T-cell (primary cell): ENCODE measurements at regions of chr13 and their contacts with region 1.

Region 1: GRCh38 chr13:60028021-60028420 is 135.7 kb downstream of the DIAPH3 start:
- DNase-seq: no peak
- ATAC-seq: no peak
- H3K4me3 ChIP-seq: no peak overlapping the region
- H3K4me3 Mint-ChIP-seq: no peak overlapping the region
- H3K27ac ChIP-seq: no peak overlapping the region
- H3K27ac Mint-ChIP-seq: no peak overlapping the region
- H3K4me1 ChIP-seq: no peaks in the 10 kb centered on the region
- H3K4me1 Mint-ChIP-seq: no peaks in the 10 kb centered on the region
- H3K27me3 ChIP-seq: peaks cover 0 to 2% of the 10 kb centered on the region in 2 experiments
- H3K27me3 Mint-ChIP-seq: peaks cover 1 to 4% of the 10 kb centered on the region in 2 donors

Region 2: GRCh38 chr13:59477011-59477410 is 551.0 kb before region 1 on chr13:
- CTCF ChIA-PET with region 1: no interaction called
- POLR2A ChIA-PET with region 1: no interaction called
- DNase-seq: no peak
- ATAC-seq: no peak
- H3K4me3 ChIP-seq: no peak overlapping the region
- H3K4me3 Mint-ChIP-seq: no peak overlapping the region
- H3K27ac ChIP-seq: no peak overlapping the region
- H3K27ac Mint-ChIP-seq: no peak overlapping the region
- H3K4me1 ChIP-seq: no peaks in the 10 kb centered on the region
- H3K4me1 Mint-ChIP-seq: no peaks in the 10 kb centered on the region
- H3K27me3 ChIP-seq: no peaks in the 10 kb centered on the region
- H3K27me3 Mint-ChIP-seq: peaks cover 0 to 4% of the 10 kb centered on the region in 2 donors

Region 3: DNA sequence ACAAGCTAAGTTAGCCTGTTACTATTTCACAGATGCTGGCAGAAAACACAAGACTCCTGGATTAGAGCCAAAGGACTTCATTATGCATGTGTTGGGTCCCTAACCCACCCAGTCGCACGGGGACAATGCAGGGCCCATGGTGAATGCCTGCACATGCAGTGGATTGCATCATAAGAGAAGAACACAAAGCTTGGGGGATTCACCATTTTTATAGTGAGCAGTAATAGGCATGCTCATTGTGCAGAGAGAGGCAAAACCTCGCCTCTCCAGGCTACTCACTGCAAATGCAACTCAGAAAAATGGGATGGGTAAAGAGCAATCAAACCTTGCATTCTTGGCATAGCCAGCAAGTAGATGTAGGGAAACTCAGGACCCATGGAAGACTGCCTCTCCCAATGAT is 19.9 kb after region 1 on chr13:
- CTCF ChIA-PET with region 1: interaction called, 3 to 6 read pairs
- POLR2A ChIA-PET with region 1: interaction called in 1 of 2 experiments, 10 read pairs
- DNase-seq: no peak
- ATAC-seq: no peak
- H3K4me3 ChIP-seq: no peak overlapping the region
- H3K4me3 Mint-ChIP-seq: no peak overlapping the region
- H3K27ac ChIP-seq: no peak overlapping the region
- H3K27ac Mint-ChIP-seq: no peak overlapping the region
- H3K4me1 ChIP-seq: no peaks in the 10 kb centered on the region
- H3K4me1 Mint-ChIP-seq: no peaks in the 10 kb centered on the region
- H3K27me3 ChIP-seq: no peaks in the 10 kb centered on the region
- H3K27me3 Mint-ChIP-seq: no peaks in the 10 kb centered on the region

Region 4: GRCh38 chr13:60109285-60109684 is 81.3 kb after region 1 on chr13:
- CTCF ChIA-PET with region 1: no interaction called
- POLR2A ChIA-PET with region 1: interaction called in 1 of 2 experiments, 17 read pairs
- DNase-seq: no peak
- ATAC-seq: no peak
- H3K4me3 ChIP-seq: no peak overlapping the region
- H3K4me3 Mint-ChIP-seq: no peak overlapping the region
- H3K27ac ChIP-seq: no peak overlapping the region
- H3K27ac Mint-ChIP-seq: no peak overlapping the region
- H3K4me1 ChIP-seq: no peaks in the 10 kb centered on the region
- H3K4me1 Mint-ChIP-seq: no peaks in the 10 kb centered on the region
- H3K27me3 ChIP-seq: no peaks in the 10 kb centered on the region
- H3K27me3 Mint-ChIP-seq: no peaks in the 10 kb centered on the region